ENCODE measurements at regions of chr7 and their contacts with region 1.

Region 1: DNA sequence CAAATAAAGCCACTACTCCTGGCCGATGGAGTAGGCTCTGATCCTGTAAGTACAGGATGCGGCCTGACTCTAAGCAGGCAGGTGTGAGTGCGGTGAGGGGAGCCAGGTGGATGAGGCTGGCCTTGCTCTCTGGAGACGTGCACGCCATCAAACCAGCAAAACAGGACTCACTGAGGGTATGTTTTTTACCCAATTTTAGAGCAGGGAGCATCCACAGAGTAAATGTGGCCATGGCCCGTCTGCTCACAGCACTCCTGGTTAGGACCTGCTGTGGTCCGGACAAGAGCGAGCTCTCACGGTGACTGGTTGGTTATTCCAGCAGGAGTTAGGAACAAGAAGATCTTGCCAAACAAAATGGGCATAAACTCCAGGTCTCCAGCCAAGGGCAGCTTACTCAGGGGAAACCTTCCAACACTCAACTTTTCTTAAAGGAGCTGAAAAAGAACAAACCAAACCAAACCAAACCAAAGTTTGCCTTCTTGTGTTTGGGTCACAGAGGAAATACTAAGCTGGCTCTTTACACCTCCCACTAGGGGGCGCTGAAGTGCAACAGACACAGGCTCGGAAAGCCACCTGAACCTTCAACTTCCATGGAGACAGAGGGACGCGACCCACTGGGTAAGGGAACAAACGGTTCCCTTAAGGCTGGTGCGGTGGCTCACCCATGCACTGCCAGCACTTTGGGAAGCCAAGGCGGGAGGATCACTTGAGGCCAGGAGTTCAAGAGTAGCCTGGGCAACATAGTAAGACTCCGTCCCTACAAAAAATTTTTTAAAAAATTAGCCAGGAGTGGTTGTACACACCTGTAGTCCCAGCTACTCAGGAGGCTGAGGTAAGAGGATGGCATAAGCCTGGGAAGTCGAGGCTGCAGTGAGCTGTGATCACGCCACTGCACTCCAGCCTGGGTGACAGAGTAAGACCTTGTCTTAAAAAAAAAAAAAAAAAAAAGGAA is 122.4 kb downstream of the CLEC2L start:
- DNase-seq: peak; percentile 72 to 95 (median 81)
- ATAC-seq: peak; percentile 57
- H3K4me3 ChIP-seq: no peak overlapping the region
- H3K4me3 Mint-ChIP-seq: peak overlapping the region; percentile 32
- H3K27ac ChIP-seq: no peak overlapping the region
- H3K27ac Mint-ChIP-seq: peak overlapping the region; percentile 81
- H3K4me1 ChIP-seq: peaks cover 64% of the 10 kb centered on the region
- H3K4me1 Mint-ChIP-seq: peaks cover 84% of the 10 kb centered on the region
- H3K27me3 ChIP-seq: no peaks in the 10 kb centered on the region
- H3K27me3 Mint-ChIP-seq: no peaks in the 10 kb centered on the region
- CTCF ChIP-seq: peak; percentile 93

Region 2: GRCh38 chr7:139620676-139621344 is 25.0 kb before region 1 on chr7:
- CTCF ChIA-PET with region 1: interaction called, 9 read pairs
- POLR2A ChIA-PET with region 1: interaction called, 4 read pairs
- intact Hi-C with region 1: loop called (anchors 2 kb)
- DNase-seq: peak; percentile 28 to 64 (median 49)
- ATAC-seq: peak; percentile 91
- H3K4me3 ChIP-seq: no peak overlapping the region
- H3K4me3 Mint-ChIP-seq: no peak overlapping the region
- H3K27ac ChIP-seq: no peak overlapping the region
- H3K27ac Mint-ChIP-seq: peak overlapping the region; percentile 4
- H3K4me1 ChIP-seq: peaks cover 14% of the 10 kb centered on the region
- H3K4me1 Mint-ChIP-seq: peaks cover 26% of the 10 kb centered on the region
- H3K27me3 ChIP-seq: no peaks in the 10 kb centered on the region
- H3K27me3 Mint-ChIP-seq: no peaks in the 10 kb centered on the region
- CTCF ChIP-seq: peak; percentile 77

Region 3: DNA sequence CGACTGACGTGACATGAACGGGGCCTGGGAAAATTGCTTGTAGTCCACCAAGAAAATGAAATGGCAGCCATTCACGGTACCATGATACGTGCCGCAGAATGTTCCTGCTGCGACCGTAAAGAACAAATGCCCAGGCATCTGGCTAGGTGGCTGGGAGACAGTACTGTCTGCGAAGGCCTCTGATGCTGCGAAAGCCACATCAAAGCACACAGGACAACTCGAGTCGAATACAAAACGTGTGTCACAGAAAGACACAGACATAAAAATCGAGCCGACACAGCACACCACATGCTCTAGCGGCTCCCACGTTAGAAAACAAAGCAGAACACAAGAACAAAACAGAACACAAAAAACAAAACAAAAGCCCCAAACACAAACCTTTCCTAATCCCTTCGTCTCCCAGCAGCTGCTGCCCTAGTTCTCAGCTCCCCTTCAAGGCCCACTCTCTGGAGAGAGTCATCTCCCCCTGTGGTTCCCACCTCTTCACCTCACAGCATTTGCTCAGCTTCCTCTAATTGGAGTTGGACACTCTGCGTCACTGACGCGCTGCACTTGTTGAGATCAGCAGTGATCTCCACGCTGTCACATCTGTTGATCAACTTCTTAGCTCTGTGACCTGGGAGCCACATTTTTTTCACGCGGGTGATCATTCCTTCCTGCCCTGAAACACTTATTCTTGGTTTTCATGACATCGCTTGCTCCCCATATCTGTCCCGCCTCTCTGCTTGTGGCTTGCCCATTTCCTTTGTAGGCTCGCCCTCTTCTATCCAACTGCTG is 10.1 kb before region 1 on chr7:
- CTCF ChIA-PET with region 1: interaction called, 17 read pairs
- POLR2A ChIA-PET with region 1: interaction called, 34 read pairs
- intact Hi-C with region 1: loop called in 1 of 2 experiments (anchors 1 kb)
- DNase-seq: peak; percentile 44 to 93 (median 64)
- ATAC-seq: peak; percentile 87
- H3K4me3 ChIP-seq: peak overlapping the region; percentile 27
- H3K4me3 Mint-ChIP-seq: peak overlapping the region; percentile 72
- H3K27ac ChIP-seq: peak overlapping the region; percentile 58 to 71
- H3K27ac Mint-ChIP-seq: peak overlapping the region; percentile 92
- H3K4me1 ChIP-seq: peaks cover 47% of the 10 kb centered on the region
- H3K4me1 Mint-ChIP-seq: peaks cover 73% of the 10 kb centered on the region
- H3K27me3 ChIP-seq: no peaks in the 10 kb centered on the region
- H3K27me3 Mint-ChIP-seq: no peaks in the 10 kb centered on the region
- CTCF ChIP-seq: no peak

Region 4: DNA sequence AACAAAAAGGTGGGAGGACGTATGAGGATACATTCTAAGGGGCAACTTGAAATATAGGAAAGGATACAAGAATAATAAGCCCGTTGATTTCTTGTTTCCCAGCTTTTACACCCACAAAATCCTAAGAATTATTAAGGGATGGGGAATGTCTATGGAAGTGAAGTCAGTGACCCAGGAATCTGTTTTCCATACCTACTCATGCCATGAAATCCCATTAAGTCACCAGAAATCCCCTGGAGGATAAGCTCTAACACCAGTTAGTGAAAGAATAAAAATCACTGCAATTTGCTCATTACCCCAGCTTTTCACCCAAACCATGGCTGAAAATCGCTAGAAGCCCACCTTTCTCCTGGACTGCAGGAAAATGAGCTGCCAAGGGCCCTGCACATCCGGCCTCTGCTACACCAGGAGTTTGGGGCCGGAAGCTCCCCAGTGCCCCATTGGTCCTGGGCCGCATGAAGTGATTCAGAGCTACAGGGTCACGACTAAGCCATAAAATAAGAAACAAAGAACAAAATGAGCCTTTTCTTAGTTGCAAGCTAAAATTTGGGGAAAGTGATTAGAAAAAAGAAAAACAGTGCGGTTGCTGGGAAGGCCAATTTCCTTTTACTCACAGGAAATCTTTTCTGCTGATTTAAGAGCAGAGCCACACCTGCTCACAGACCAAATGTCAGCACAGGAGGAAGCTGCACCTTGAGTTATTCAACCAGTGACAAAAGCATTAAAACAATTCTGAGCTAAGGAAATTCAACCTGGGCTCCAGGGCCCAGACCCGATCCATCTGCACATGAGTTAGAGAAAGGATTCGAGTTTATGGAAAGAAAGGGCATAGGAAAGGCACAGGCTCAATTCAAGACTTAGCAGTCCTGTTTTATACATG is 91.6 kb after region 1 on chr7:
- CTCF ChIA-PET with region 1: interaction called, 5 read pairs
- POLR2A ChIA-PET with region 1: interaction called, 5 read pairs
- intact Hi-C with region 1: loop called in 1 of 2 experiments (anchors 5 kb)
- DNase-seq: peak in 6 of 14 experiments; percentile 19 to 45 (median 24)
- ATAC-seq: peak; percentile 72
- H3K4me3 ChIP-seq: no peak overlapping the region
- H3K4me3 Mint-ChIP-seq: peak overlapping the region; percentile 72
- H3K27ac ChIP-seq: peak overlapping the region in 1 of 2 donors; percentile 64
- H3K27ac Mint-ChIP-seq: peak overlapping the region; percentile 91
- H3K4me1 ChIP-seq: peaks cover 53% of the 10 kb centered on the region
- H3K4me1 Mint-ChIP-seq: peaks cover 81% of the 10 kb centered on the region
- H3K27me3 ChIP-seq: no peaks in the 10 kb centered on the region
- H3K27me3 Mint-ChIP-seq: no peaks in the 10 kb centered on the region
- CTCF ChIP-seq: no peak

Region 5: DNA sequence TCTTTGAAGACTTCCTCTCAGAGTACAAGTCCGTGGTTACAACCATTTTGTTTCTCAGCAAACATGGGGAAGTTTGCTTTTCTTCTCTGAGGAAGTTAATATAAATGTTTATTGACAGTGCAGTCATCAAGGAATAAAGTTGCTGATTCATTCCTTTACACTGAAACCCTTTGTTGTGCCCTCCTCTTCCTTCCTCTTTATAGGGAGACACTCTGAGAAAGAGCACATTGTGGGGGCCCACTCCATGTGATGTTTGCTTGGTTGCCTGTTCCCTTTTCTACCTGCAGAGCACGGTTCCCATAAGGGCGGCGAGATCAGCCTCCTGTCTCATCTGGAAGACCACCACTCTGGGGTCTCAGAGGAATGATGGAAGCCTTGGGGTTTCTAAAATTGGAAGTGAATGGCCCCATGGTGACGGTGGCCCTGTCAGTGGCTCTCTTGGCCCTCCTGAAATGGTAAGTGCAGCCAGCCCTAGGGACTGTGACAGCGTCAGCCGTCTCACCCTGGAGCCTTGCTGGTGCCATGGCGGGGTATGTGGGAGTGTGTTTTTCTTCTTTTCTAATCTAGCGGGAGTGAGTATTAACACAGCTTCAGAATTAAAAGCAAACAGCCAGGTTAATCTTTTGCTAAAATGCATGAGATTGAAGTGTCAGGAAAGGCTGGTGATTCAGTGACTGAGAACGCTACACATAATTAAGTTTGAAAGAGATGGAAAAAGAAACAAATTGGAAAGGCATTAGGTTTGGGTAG is 183.4 kb after region 1 on chr7 and contains the start of gene TBXAS1:
- CTCF ChIA-PET with region 1: no interaction called
- POLR2A ChIA-PET with region 1: no interaction called
- intact Hi-C with region 1: loop called in 1 of 2 experiments (anchors 10 kb)
- DNase-seq: peak in 6 of 14 experiments; percentile 6 to 50 (median 27)
- ATAC-seq: peak; percentile 63
- H3K4me3 ChIP-seq: peak within 1 kb of the TSS; percentile 49
- H3K4me3 Mint-ChIP-seq: peak within 1 kb of the TSS; percentile 40
- H3K27ac ChIP-seq: peak within 1 kb of the TSS in 1 of 2 donors; percentile 74
- H3K27ac Mint-ChIP-seq: peak within 1 kb of the TSS; percentile 88
- H3K4me1 ChIP-seq: peaks cover 22% of the 10 kb centered on the region
- H3K4me1 Mint-ChIP-seq: peaks cover 37% of the 10 kb centered on the region
- H3K27me3 ChIP-seq: no peaks in the 10 kb centered on the region
- H3K27me3 Mint-ChIP-seq: peaks cover 4% of the 10 kb centered on the region
- CTCF ChIP-seq: no peak
- total RNA-seq, gene TBXAS1: 5.5 to 6.0 TPM

Region 6: GRCh38 chr7:140003913-140004382 is 358.1 kb after region 1 on chr7:
- CTCF ChIA-PET with region 1: interaction called, 8 read pairs
- POLR2A ChIA-PET with region 1: no interaction called
- intact Hi-C with region 1: loop called (anchors 1 kb)
- DNase-seq: peak in 5 of 14 experiments; percentile 7 to 58 (median 46)
- ATAC-seq: no peak
- H3K4me3 ChIP-seq: no peak overlapping the region
- H3K4me3 Mint-ChIP-seq: no peak overlapping the region
- H3K27ac ChIP-seq: no peak overlapping the region
- H3K27ac Mint-ChIP-seq: no peak overlapping the region
- H3K4me1 ChIP-seq: no peaks in the 10 kb centered on the region
- H3K4me1 Mint-ChIP-seq: no peaks in the 10 kb centered on the region
- H3K27me3 ChIP-seq: no peaks in the 10 kb centered on the region
- H3K27me3 Mint-ChIP-seq: no peaks in the 10 kb centered on the region
- CTCF ChIP-seq: peak; percentile 64

Region 7: GRCh38 chr7:140326116-140326928 is 680.5 kb after region 1 on chr7:
- CTCF ChIA-PET with region 1: no interaction called
- POLR2A ChIA-PET with region 1: no interaction called
- intact Hi-C with region 1: loop called in 1 of 2 experiments (anchors 10 kb)
- DNase-seq: peak; percentile 34 to 74 (median 49)
- ATAC-seq: peak; percentile 86
- H3K4me3 ChIP-seq: no peak overlapping the region
- H3K4me3 Mint-ChIP-seq: no peak overlapping the region
- H3K27ac ChIP-seq: no peak overlapping the region
- H3K27ac Mint-ChIP-seq: no peak overlapping the region
- H3K4me1 ChIP-seq: peaks cover 10% of the 10 kb centered on the region
- H3K4me1 Mint-ChIP-seq: no peaks in the 10 kb centered on the region
- H3K27me3 ChIP-seq: no peaks in the 10 kb centered on the region
- H3K27me3 Mint-ChIP-seq: no peaks in the 10 kb centered on the region
- CTCF ChIP-seq: peak; percentile 56